Head of caudate nucleus (tissue), 42 donors: ENCODE measurements at regions of chr19 and their contacts with region 1.

Region 1: GRCh38 chr19:34974646-34975045 is 10.6 kb upstream of the ZNF792 start:
- DNase-seq: peak in 1 of 42 donors; percentile 19

Region 2: DNA sequence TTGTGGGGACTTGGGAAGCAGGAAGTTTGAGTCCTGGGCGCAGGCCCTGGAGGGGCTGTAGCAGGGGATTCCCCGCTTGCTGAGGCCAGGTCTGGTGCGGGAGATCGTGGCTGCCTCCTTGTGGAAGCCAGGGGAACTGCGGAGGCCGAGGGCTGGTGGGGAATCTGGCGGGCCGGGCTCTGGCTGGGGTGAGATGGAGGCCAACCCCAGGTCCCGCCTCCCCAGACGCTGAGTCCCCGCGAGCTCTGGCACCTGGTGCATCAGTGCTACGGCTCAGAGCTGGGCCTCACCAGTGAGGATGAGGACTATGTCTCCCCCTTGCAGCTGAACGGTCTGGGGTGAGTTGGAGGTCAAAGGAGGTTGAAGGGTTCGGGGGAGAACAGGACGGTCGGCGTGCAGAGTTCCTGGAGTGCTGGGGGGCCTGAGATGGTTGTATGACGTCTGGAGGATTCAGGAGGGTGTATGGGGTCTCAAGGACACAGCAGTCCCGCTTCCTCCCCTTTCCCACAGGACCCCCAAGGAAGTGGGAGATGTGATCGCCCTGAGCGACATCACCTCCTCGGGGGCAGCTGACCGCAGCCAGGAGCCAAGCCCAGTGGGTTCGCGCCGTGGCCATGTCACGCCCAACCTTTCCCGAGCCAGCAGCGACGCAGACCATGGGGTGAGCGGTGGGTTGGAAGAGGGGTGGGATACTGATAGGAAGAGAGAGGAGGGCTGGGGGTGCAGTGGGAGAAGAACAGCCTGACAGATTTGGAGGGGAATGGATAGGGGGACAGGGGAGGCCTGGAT is 38.6 kb after region 1 on chr19:
- intact Hi-C with region 1: loop called (anchors 1 kb)
- DNase-seq: peak; percentile 39 to 86 (median 66)

Region 3: GRCh38 chr19:35066691-35067563 is 92.3 kb after region 1 on chr19:
- intact Hi-C with region 1: no loop called
- DNase-seq: peak; percentile 69 to 97 (median 92)

Region 4: DNA sequence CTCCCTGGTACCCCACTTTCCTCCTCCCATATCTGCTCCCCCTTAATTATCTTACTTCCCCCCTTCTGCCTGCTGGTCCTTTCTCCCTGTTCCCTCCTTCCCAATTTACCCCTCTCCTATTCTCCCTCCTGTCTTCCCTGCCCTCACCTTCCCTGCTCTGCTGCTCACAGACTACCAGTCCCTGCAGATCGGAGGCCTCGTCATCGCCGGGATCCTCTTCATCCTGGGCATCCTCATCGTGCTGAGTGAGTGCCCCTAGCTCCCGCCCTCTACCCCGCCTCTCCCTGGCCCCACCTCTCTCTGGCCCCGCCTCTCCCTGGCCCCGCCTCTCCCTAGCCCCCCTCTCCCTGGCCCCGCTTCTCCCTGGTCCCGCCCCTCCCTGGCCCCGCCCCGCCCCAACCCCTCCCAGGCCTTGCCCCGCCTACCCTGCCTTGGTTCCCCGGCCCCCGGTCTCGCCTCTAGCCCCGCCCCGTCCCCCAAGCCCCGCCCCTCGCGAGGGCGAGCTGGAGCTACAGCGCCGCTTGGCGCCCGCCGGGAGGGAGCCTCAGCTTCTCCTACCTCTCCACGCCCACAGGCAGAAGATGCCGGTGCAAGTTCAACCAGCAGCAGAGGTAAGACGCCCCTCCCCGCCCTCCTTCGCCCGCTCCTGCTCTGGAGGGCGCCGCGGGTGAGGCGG is 166.5 kb after region 1 on chr19:
- intact Hi-C with region 1: no loop called
- DNase-seq: peak; percentile 88 to 98 (median 96)